Activated B cell treated with CpG ODN at 0.5 μM for 24 hours (primary cell): ENCODE measurements at regions of chr2 and their contacts with region 1.

Region 1: GRCh38 chr2:64750817-64751285 is 97.1 kb upstream of the SERTAD2 start:
- DNase-seq: peak; percentile 92
- ATAC-seq: peak; percentile 82
- H3K4me3 Mint-ChIP-seq: peak overlapping the region; percentile 98
- H3K27ac Mint-ChIP-seq: peak overlapping the region; percentile 98
- H3K4me1 Mint-ChIP-seq: peaks cover 26% of the 10 kb centered on the region
- H3K27me3 Mint-ChIP-seq: no peaks in the 10 kb centered on the region
- CTCF ChIP-seq: no peak

Region 2: DNA sequence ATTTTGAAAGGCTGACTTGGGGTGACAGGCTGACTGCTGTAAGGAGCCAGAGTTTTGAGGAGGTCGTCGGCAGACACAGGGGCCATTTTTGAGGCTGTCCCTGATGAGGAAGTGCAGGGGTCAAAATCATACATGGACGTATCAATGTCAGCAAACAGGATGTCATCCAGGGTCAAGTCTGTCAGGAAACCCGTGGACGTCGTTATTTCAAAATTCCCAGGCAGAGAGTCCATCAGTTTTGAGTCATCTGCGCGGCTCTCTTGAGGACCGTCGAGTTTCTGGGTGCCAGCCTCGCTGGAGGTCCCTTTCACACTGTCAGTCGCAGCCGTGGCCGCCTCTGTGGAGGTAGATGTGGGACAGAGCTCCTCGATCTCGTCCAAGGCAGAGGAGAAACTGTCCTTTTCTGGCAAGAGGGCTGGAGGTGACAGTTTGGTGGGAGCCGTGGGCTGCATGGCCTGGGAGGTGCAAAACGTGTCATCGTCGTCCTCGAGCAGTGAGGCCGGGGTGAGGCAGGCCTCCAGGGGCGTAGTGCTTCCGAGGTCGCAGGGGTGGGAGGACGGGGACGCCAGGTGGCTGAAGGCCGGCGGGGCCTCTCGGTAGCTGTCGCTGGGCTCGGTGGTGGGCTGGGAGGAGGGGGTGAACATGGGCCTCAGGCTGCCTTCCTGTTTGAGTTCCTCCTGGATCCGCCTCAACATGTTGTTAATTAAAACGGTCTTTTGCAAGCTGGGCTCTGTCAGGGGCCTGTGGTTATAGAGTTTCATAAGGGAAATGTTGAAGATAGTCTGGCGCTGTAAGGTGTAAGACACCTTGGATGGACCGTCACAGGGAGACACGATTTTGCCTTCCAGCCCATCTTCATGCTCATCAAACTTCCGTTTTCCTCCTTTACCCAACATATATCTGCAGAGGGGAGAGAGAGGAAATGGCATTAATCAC is 114.6 kb before region 1 on chr2:
- CTCF ChIA-PET with region 1: no interaction called
- POLR2A ChIA-PET with region 1: interaction called, 439 read pairs
- intact Hi-C with region 1: no loop called
- DNase-seq: no peak
- ATAC-seq: peak; percentile 48
- H3K4me3 Mint-ChIP-seq: peak overlapping the region; percentile 68
- H3K27ac Mint-ChIP-seq: peak overlapping the region; percentile 94
- H3K4me1 Mint-ChIP-seq: peaks cover 71% of the 10 kb centered on the region
- H3K27me3 Mint-ChIP-seq: no peaks in the 10 kb centered on the region
- CTCF ChIP-seq: no peak

Region 3: DNA sequence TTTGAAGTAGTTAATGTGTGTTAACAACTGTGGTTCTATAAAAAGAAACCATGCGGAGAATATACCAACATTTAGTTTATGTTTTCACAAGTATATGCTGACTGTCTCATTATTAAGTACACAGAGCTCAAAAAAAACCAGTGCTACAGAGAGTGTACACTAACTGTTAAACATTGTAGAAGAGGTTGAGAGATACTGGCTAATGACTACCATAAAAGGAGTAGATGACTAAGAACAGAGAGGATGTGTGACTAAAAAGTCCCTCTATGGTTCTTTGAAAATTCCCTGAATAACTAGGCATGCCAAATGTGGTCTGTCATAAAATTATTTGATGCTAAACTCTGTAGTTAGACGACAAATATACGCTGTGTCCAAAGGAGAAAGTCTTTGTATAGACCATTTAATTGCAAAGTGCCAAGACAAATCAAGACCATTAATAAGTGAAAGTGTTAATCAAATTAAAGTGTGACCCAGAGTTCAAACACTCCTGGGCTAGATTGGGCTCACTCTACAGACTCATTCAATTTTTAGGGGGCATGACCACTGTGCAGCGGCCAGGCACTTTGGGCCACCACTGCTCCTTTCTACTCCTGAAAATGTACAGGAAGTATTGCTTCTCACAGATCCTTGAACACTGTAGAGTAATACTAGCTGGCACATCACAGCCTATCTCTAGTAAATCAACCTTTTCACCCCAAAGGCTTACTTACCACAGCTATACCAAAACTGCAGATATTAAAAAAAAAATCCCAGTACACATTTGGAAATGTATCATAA is 52.0 kb before region 1 on chr2:
- CTCF ChIA-PET with region 1: no interaction called
- POLR2A ChIA-PET with region 1: interaction called, 13 read pairs
- intact Hi-C with region 1: loop called (anchors 1 kb)
- DNase-seq: no peak
- ATAC-seq: peak; percentile 86
- H3K4me3 Mint-ChIP-seq: peak overlapping the region; percentile 52
- H3K27ac Mint-ChIP-seq: peak overlapping the region; percentile 89
- H3K4me1 Mint-ChIP-seq: peaks cover 51% of the 10 kb centered on the region
- H3K27me3 Mint-ChIP-seq: no peaks in the 10 kb centered on the region
- CTCF ChIP-seq: no peak

Region 4: GRCh38 chr2:64767670-64768468 is 17.0 kb after region 1 on chr2:
- CTCF ChIA-PET with region 1: interaction called, 9 read pairs
- POLR2A ChIA-PET with region 1: interaction called, 131 read pairs
- intact Hi-C with region 1: loop called (anchors 1 kb)
- DNase-seq: peak; percentile 76
- ATAC-seq: peak; percentile 81
- H3K4me3 Mint-ChIP-seq: peak overlapping the region; percentile 88
- H3K27ac Mint-ChIP-seq: peak overlapping the region; percentile 96
- H3K4me1 Mint-ChIP-seq: peaks cover 21% of the 10 kb centered on the region
- H3K27me3 Mint-ChIP-seq: no peaks in the 10 kb centered on the region
- CTCF ChIP-seq: no peak

Region 5: DNA sequence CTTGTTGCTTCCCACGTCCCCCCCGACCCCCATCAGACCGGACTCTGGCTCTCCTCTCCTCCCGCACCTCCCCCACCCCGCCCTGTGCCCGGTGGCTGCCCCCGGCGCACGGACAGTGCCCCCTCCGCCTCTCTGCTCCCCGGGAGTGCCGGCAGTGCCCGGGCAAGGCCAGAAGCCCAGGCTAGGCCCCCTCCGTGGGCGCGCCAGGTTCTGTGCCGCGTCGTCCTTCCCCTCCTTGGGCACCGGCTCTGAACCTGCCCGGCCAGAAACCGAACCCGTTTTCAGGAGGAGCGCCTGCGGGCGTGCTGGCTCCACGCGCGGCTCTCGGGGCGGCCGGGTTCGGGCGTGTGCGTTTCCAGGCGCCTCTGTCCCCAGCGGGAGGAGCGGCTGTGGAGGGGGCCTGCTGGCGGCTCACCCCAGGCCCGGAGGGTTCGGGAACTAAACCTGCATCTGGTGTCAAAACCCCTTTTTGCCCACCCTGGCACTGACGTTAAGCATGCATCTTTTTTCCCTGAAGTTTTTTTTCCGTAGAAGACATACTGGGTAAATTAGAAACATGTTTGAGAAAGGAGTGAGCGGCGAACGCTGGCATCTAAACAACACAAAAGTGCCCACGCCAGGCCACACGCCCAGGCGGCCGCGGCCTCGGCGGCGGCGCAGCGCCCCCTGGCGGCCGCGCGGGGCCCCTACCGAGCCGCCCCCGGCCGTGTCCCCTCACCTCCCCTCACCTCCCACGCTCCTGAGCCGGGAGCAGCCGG is 114.4 kb after region 1 on chr2:
- CTCF ChIA-PET with region 1: interaction called, 21 read pairs
- POLR2A ChIA-PET with region 1: interaction called, 161 read pairs
- intact Hi-C with region 1: loop called (anchors 1 kb)
- DNase-seq: peak; percentile 76
- ATAC-seq: peak; percentile 56
- H3K4me3 Mint-ChIP-seq: peak overlapping the region; percentile 41
- H3K27ac Mint-ChIP-seq: no peak overlapping the region
- H3K4me1 Mint-ChIP-seq: peaks cover 6% of the 10 kb centered on the region
- H3K27me3 Mint-ChIP-seq: no peaks in the 10 kb centered on the region
- CTCF ChIP-seq: no peak

Region 6: GRCh38 chr2:64928813-64929212 is 178.0 kb after region 1 on chr2:
- CTCF ChIA-PET with region 1: no interaction called
- POLR2A ChIA-PET with region 1: no interaction called
- intact Hi-C with region 1: no loop called
- DNase-seq: no peak
- ATAC-seq: no peak
- H3K4me3 Mint-ChIP-seq: no peak overlapping the region
- H3K27ac Mint-ChIP-seq: peak overlapping the region; percentile 93
- H3K4me1 Mint-ChIP-seq: peaks cover 93% of the 10 kb centered on the region
- H3K27me3 Mint-ChIP-seq: no peaks in the 10 kb centered on the region
- CTCF ChIP-seq: no peak

Region 7: GRCh38 chr2:65129826-65130663 is 379.2 kb after region 1 on chr2 and contains the start of gene RAB1A:
- CTCF ChIA-PET with region 1: no interaction called
- POLR2A ChIA-PET with region 1: no interaction called
- intact Hi-C with region 1: loop called (anchors 1 kb)
- DNase-seq: peak; percentile 91
- ATAC-seq: peak; percentile 93
- H3K4me3 Mint-ChIP-seq: peak within 1 kb of the TSS; percentile 100
- H3K27ac Mint-ChIP-seq: peak within 1 kb of the TSS; percentile 100
- H3K4me1 Mint-ChIP-seq: peaks cover 49% of the 10 kb centered on the region
- H3K27me3 Mint-ChIP-seq: no peaks in the 10 kb centered on the region
- CTCF ChIP-seq: no peak
- total RNA-seq, gene RAB1A: 45.0 and 46.4 TPM in 2 replicates

Region 8: DNA sequence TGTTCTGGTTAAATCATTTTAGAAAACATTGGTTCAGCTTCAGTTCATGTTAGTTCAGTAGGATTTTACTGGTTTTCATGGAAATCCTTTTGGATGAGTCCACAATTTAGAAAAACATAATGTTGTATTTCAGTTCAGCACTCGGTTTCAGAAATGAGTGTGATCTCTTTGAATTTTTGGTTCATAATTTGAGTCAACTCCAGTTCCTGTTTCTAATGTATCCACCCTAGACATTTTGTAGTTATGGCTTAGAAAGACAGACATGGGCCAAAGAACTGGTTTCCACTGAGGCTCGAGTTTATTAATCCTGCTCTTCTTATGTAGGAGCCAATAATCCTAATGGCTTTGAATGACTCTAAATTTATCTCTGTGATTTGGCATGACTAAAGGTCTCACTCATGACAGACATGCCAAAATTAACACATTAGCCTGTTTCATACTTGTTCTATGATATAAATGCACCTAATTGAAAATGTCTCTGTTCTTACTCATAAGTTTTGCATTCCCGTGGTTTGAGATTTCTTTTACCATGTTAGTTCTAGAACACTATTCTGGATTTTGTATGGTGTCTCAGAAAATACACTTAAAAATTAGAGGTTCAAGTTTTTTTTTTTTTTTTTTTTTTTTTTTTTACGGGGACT is 763.8 kb after region 1 on chr2:
- CTCF ChIA-PET with region 1: no interaction called
- POLR2A ChIA-PET with region 1: no interaction called
- intact Hi-C with region 1: no loop called
- DNase-seq: no peak
- ATAC-seq: no peak
- H3K4me3 Mint-ChIP-seq: no peak overlapping the region
- H3K27ac Mint-ChIP-seq: no peak overlapping the region
- H3K4me1 Mint-ChIP-seq: no peaks in the 10 kb centered on the region
- H3K27me3 Mint-ChIP-seq: peaks cover 4% of the 10 kb centered on the region
- CTCF ChIP-seq: no peak